A673 (cell line): ENCODE measurements at regions of chr18 and their contacts with region 1.

Region 1: DNA sequence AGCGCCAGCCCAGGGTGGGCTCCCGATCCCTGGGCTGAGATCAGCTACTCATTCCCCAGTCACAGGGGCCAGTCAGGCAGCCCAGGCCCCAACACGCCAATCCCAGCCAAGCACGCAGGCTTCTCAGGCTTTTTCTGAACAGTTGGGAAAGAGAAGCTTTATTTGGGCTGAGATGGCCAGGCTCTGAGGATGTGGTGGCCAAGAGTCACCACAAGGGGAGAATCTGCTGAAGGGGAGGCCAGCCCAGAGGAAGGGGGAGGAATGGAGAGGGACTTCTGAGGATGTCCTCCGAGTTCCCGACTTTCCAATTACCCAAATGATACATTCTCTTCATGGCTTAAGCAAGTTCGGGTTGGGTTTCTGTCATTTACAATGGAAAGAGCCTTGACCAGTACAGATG is 2.8 kb upstream of the DIPK1C start:
- DNase-seq: no peak
- H3K4me3 ChIP-seq: no peak overlapping the region
- H3K27ac ChIP-seq: no peak overlapping the region
- H3K4me1 ChIP-seq: no peaks in the 10 kb centered on the region
- H3K27me3 ChIP-seq: peaks cover 71% of the 10 kb centered on the region
- CTCF ChIP-seq: peak; percentile 30

Region 2: GRCh38 chr18:74407888-74408287 is 52.0 kb before region 1 on chr18:
- CTCF ChIA-PET with region 1: no interaction called
- POLR2A ChIA-PET with region 1: no interaction called
- intact Hi-C with region 1: loop called (anchors 10 kb)
- DNase-seq: no peak
- H3K4me3 ChIP-seq: no peak overlapping the region
- H3K27ac ChIP-seq: no peak overlapping the region
- H3K4me1 ChIP-seq: no peaks in the 10 kb centered on the region
- H3K27me3 ChIP-seq: peaks cover 8% of the 10 kb centered on the region
- CTCF ChIP-seq: no peak